AG04449 (cell line): ENCODE measurements at regions of chr17 and their contacts with region 1.

Region 1: GRCh38 chr17:1716076-1716995 is 6.2 kb upstream of the TLCD2 start:
- DNase-seq: peak; percentile 99
- H3K4me3 ChIP-seq: peak overlapping the region; percentile 97
- CTCF ChIP-seq: peak; percentile 31

Region 2: DNA sequence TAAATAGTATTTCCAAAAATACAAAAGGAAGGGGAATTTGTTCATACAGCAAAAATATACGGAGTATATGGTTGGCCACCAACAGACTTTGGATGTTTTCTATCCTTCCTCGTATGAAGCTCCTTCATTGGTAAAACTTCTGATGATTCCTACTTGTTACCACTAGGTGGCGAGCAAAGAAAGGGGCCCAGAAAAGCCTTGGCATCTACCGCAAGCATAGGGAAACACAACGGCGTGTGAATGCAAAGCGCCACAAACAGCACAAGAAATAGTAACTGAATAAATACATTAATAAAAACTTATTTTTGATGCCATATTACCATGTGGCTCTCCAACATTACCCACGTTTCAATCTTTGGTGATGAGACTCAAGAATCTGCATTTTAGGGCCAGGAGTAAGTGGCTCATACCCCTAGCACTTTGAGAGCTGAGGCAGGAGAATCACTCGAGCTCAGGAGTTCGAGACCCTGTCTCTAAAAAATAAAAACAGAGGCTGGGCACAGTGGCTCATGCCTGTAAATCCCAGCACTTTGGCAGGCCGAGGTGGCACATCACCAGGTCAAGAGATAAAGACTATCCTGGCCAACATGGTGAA is 350.8 kb before region 1 on chr17:
- CTCF ChIA-PET with region 1: no interaction called
- POLR2A ChIA-PET with region 1: no interaction called
- DNase-seq: peak; percentile 40
- H3K4me3 ChIP-seq: no peak overlapping the region
- CTCF ChIP-seq: peak; percentile 74

Region 3: GRCh38 chr17:1617620-1618174 is 98.6 kb before region 1 on chr17:
- CTCF ChIA-PET with region 1: no interaction called
- POLR2A ChIA-PET with region 1: no interaction called
- DNase-seq: peak; percentile 29
- H3K4me3 ChIP-seq: no peak overlapping the region
- CTCF ChIP-seq: no peak

Region 4: GRCh38 chr17:1648963-1649843 is 67.1 kb before region 1 on chr17:
- CTCF ChIA-PET with region 1: interaction called, 13 read pairs
- POLR2A ChIA-PET with region 1: interaction called, 8 read pairs
- DNase-seq: peak; percentile 67
- H3K4me3 ChIP-seq: peak overlapping the region; percentile 66
- CTCF ChIP-seq: peak; percentile 97

Region 5: DNA sequence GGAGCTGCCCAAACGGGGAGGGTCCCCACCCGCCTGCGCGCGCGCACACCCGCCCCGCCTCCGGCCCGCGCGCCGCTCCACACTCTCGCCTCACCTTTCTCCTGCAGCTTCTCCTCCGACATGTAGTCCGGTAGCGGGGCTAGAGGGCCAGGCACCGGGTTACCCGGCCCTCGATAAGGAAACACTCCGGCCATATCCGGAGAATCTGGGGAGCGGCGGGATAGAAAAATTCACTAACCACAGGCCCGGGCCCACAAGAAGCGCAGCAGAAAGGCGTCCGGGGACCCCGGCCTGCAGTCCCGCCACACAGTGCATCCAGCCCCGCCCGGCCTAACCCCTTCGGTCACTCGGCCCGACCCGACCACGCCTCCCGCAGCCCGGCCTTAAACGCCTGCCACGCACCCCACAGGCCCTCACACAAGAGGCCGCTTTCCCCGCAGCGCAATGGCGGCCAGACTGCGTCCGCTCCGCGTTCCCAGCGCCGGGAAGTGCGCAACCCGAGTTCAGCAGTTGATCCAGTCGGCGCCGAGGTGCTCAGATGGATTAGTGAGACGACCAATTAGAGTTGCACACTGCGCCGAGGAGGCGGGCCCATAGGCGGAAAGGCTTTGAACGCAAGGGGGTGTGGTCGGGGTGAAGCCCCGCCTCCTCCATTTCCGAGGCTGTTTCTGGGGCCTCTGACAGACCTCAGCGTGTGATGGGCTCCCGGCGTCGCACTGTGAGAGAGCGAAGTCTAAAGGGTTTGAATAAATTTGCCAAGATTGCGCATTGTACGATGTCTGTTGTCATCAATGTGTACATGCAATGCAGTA is 31.8 kb before region 1 on chr17 and contains the start of gene PRPF8:
- CTCF ChIA-PET with region 1: interaction called, 8 read pairs
- POLR2A ChIA-PET with region 1: interaction called, 11 read pairs
- DNase-seq: peak; percentile 73
- H3K4me3 ChIP-seq: peak within 1 kb of the TSS; percentile 86
- CTCF ChIP-seq: no peak

Region 6: DNA sequence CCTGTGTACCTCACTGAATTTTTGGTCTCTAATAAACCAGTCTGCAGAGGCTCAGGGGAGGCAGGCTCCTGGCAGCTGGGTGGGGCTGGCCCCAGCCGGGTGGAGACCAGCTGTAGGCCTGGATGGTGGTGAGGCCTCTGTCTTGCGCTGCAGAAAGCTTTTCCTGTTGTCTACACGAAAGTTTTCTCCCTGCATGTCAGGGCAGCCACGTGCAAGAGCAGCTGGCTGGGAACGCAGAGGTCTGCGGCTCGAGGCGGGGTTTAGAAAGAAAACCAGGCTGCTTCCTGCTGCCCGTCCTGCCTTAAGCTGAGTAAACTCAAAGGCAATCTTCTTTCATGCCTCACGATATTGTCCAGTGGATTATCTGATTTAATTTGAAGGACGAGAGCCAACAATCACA is 47.9 kb after region 1 on chr17:
- CTCF ChIA-PET with region 1: interaction called, 10 read pairs
- POLR2A ChIA-PET with region 1: interaction called, 12 read pairs
- DNase-seq: peak; percentile 44
- H3K4me3 ChIP-seq: peak overlapping the region; percentile 29
- CTCF ChIP-seq: no peak

Region 7: DNA sequence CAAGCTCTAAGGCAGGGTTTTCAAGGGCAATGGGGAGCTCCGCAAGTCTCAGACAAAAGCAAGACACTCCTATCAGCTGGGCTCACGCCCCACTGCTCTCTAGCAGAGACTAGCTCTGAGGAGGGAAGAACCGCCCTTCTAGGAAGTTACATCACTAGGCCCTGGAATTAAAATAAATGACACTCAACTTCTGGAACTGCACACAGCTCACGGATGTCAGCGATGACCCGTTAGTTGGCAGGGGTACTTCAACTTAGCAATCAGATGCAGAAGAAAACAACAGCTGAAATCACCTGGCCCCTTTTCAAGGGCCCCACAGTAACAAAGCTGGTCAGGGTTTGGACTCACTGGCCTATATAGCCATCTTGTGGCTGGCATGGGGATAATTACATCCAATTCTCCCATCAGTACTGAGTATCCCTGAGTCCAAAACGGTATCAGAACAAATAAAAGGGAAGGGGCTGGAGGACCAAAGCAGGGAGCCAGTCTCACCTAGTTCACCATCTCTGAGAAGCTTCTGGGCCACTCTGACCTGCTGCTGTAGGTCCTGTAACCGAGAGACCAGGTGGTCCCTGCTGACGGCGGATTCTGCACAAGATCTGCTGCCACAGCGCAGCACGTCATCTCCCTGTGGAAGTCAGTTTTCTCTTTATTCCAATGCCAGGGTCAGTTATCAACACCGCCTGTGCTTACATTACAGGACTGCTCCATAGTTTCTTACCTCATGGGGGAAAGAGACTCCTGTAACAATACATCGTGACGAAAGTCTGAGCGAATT is 67.7 kb after region 1 on chr17:
- CTCF ChIA-PET with region 1: interaction called, 180 read pairs
- POLR2A ChIA-PET with region 1: interaction called, 16 read pairs
- DNase-seq: no peak
- H3K4me3 ChIP-seq: no peak overlapping the region
- CTCF ChIP-seq: peak; percentile 67

Region 8: DNA sequence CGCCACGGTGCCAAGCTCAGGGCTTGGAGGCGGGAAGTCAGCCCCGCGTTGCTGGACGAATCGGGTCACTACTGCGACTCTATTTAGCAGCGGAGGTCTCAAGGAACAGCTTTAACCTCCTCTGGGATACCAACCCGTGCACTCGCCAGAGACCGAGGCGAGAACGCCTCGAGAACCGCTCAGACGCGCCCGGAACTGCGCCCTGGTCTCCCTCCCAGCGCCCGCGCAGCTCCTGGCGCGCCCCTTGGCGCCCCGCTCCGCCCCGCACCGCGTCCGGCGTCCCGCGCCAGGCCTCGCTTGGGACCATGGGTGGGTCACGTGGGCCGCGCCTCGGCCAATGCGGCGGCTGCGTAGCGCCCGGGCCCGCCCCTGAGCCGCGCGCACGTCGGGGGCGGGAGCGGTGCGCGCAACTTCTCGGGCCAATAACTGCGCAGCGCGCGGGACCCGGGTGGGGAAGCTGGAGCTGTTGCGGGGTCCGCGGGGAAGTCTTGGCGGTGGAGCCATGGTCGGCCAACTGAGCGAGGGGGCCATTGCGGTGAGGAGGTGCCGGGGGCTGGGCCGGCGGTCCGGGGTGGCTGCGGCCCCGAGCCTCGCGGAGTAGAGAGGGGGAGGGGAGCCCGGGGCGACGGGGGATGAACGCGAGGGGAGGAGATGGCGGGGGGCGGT is 113.4 kb after region 1 on chr17 and contains the starts of genes RPA1 and SMYD4:
- CTCF ChIA-PET with region 1: interaction called, 9 read pairs
- POLR2A ChIA-PET with region 1: interaction called, 10 read pairs
- DNase-seq: no peak
- H3K4me3 ChIP-seq: peak within 1 kb of the TSS; percentile 87
- CTCF ChIP-seq: no peak

Region 9: GRCh38 chr17:1852327-1852726 is 136.0 kb after region 1 on chr17:
- CTCF ChIA-PET with region 1: no interaction called
- POLR2A ChIA-PET with region 1: no interaction called
- DNase-seq: no peak
- H3K4me3 ChIP-seq: no peak overlapping the region
- CTCF ChIP-seq: no peak

Region 10: DNA sequence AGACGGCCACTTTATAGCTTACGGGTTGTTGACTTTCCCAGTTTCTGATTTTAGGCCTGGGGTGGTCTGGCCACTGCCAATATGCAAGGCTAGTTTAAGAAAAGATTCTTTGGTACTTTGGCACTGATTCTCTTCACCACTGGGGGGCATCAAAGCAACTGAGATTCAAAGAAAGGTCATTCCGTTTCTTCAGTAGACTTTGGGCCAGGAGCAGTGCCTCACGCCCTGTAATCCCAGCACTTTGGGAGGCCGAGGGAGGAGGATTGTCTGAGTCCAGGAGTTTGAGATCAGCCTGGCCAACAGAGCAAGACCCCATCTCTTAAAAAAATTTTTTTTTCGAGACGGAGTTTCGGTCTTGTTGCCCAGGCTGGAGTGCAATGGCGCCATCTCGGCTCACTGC is 166.5 kb after region 1 on chr17:
- CTCF ChIA-PET with region 1: interaction called, 19 read pairs
- POLR2A ChIA-PET with region 1: interaction called, 3 read pairs
- DNase-seq: no peak
- H3K4me3 ChIP-seq: no peak overlapping the region
- CTCF ChIP-seq: peak; percentile 47